Breast epithelium (tissue), 4 donors: ENCODE measurements at regions of chr15 and their contacts with region 1.

Region 1: GRCh38 chr15:50256188-50257041 is 9.1 kb downstream of the HDC start:
- DNase-seq: no peak
- H3K4me3 ChIP-seq: no peak overlapping the region
- H3K27ac ChIP-seq: no peak overlapping the region
- H3K4me1 ChIP-seq: no peaks in the 10 kb centered on the region
- H3K27me3 ChIP-seq: no peaks in the 10 kb centered on the region
- CTCF ChIP-seq: no peak
- POLR2A ChIP-seq: no peak

Region 2: DNA sequence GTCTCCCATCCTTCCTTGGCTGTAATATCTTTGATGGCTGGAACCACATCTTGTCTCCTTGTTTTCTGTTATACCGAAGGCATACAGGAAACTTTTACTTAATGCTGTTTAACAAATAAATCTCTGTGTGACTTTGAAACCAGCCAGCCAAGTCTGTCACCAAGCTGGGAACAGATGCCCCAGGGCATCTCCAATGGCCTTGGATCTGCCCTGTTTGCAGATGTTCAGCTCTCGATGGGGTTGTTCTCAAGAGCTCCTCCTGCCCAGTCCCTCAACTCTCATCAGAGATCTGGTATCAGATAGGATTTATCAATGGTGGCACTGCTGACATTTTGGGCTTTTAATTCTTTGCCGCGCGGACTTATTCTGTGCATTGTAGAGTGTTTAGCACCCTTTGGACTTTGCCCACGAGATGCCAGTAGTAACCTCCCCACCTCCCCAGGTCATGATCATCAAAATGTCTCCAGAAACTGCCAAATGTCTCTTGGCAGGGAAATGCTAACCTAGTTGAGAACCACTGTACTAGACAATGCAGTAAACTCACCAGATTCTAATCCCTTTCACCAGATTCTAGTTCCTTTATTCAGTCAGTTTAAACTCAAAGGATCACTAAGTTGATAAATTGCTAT is 50.5 kb before region 1 on chr15:
- intact Hi-C with region 1: loop called (anchors 2 kb)
- DNase-seq: no peak
- H3K4me3 ChIP-seq: no peak overlapping the region
- H3K27ac ChIP-seq: no peak overlapping the region
- H3K4me1 ChIP-seq: no peaks in the 10 kb centered on the region
- H3K27me3 ChIP-seq: no peaks in the 10 kb centered on the region
- CTCF ChIP-seq: no peak
- POLR2A ChIP-seq: no peak